ENCODE measurements at regions of chr10 and their contacts with region 1.

Region 1: GRCh38 chr10:73743905-73744663 is at the start of gene SEC24C:
- DNase-seq: peak; percentile 97
- ATAC-seq: peak; percentile 93 to 98 (median 97)
- H3K4me3 ChIP-seq: peak within 1 kb of the TSS; percentile 69 to 94 (median 83)
- H3K27ac ChIP-seq: peak within 1 kb of the TSS; percentile 83 to 99 (median 92)
- H3K4me1 ChIP-seq: peaks cover 15 to 53% (median 43%) of the 10 kb centered on the region in 9 donors
- H3K27me3 ChIP-seq: no peaks in the 10 kb centered on the region
- CTCF ChIP-seq: peak in 2 of 9 donors; percentile 2 to 12
- total RNA-seq, gene SEC24C: 44.5 to 59.7 (median 51.5) TPM

Region 2: DNA sequence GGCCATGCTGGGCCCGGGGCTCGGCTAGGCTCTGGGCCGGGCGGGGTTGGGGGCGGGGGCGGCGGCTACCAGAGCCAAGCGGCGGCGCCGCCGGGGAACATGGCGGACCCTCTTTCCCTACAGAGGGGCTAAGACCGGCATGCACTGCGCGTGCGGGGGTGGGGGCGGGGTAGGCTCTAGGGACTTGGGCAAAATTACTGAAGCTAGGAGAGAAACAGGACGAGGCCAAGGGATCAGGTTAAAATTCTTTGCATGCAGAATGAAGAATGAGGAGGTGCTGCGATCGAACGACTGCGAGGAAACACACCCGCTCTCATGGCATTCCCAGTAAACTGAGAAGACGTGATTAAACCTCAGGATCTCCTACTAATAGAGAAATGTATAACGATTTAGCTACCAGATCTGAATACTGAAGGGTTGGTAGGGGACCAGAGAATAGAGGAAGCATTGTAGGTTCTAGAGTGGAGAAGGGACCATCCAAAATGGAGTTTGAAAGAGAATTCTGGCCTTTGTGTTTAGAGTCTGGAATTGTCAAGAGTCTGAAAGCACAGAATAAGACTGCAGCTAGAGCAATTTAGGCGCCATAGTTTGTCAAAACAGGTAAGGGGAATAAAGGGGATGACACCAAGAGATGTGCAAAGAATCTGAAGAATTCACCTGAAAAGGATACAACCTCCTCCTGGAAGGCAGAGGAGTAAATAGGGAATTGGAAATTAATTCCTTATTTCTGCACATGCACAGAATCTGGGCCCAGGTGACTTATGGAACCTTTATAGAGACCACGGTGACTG is 248.0 kb before region 1 on chr10 and contains the start of gene PPP3CB:
- intact Hi-C with region 1: no loop called
- DNase-seq: peak; percentile 91 to 95
- ATAC-seq: peak; percentile 88 to 96 (median 92)
- H3K4me3 ChIP-seq: peak within 1 kb of the TSS; percentile 66 to 98 (median 83)
- H3K27ac ChIP-seq: peak within 1 kb of the TSS; percentile 90 to 99 (median 98)
- H3K4me1 ChIP-seq: peaks cover 7 to 48% (median 41%) of the 10 kb centered on the region in 9 donors
- H3K27me3 ChIP-seq: no peaks in the 10 kb centered on the region
- CTCF ChIP-seq: no peak
- total RNA-seq, gene PPP3CB: 52.5 to 78.6 (median 64.5) TPM

Region 3: DNA sequence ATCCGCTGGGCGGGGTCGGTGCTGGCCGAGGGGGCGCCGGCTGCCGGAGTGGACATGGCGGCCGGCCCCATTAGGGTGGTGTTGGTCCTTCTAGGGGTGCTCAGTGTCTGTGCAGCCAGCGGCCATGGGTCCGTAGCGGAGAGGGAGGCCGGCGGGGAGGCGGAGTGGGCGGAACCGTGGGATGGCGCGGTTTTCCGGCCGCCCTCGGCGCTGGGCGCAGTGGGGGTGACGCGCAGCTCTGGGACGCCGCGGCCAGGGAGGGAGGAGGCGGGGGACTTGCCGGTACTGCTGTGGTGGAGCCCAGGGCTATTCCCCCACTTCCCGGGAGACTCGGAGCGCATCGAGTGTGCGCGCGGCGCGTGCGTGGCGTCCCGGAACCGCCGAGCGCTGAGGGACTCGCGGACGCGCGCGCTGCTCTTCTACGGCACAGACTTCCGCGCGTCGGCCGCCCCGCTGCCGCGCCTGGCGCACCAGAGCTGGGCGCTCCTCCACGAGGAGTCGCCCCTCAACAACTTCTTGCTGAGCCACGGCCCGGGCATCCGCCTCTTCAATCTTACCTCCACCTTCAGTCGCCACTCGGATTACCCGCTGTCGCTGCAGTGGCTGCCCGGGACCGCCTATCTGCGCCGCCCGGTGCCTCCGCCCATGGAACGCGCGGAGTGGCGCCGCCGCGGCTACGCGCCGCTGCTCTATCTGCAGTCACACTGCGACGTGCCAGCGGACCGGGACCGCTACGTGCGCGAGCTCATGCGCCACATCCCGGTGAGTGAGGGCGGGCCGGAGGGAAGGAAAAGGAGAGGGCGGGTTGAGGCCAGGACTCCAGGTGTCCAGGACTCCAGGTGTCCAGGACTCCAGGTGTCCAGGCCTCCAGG is 28.4 kb after region 1 on chr10:
- intact Hi-C with region 1: loop called in 1 of 10 experiments (anchors 1 kb)
- DNase-seq: peak; percentile 76 to 83
- ATAC-seq: peak; percentile 84 to 94 (median 90)
- H3K4me3 ChIP-seq: peak overlapping the region; percentile 71 to 99 (median 83)
- H3K27ac ChIP-seq: peak overlapping the region; percentile 86 to 100 (median 98)
- H3K4me1 ChIP-seq: peaks cover 24 to 47% (median 42%) of the 10 kb centered on the region in 9 donors
- H3K27me3 ChIP-seq: no peaks in the 10 kb centered on the region
- CTCF ChIP-seq: peak in 5 of 9 donors; percentile 20 to 43 (median 39)

Region 4: DNA sequence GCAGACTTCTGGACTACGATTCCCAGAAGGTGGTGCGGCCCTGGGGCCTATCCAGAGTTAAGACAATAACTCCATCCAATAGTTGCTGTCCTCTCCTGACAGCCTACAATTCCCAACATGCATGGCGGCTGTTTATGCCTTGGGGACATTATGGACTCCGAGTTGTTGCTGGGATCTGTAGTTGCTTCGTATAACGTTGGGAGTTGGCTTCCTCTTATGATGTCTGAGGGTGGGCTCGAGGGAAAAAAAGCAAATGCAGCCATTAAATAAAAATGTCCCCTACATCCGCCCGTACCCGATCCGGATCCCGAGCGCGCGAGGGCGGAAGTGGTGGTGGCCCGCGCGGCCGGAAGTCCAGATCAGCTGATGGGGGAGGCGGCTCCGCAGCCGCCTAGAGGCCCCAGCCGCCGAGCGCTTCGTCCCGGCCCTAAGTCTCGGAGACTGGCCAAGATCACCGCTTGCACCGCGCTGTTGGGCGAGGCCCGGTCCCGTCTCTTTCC is 41.2 kb after region 1 on chr10 and contains the start of gene ZSWIM8:
- intact Hi-C with region 1: loop called in 1 of 10 experiments (anchors 5 kb)
- DNase-seq: peak; percentile 86 to 92
- ATAC-seq: peak; percentile 87 to 95 (median 92)
- H3K4me3 ChIP-seq: peak within 1 kb of the TSS; percentile 68 to 97 (median 92)
- H3K27ac ChIP-seq: peak within 1 kb of the TSS; percentile 74 to 97 (median 90)
- H3K4me1 ChIP-seq: peaks cover 15 to 67% (median 59%) of the 10 kb centered on the region in 9 donors
- H3K27me3 ChIP-seq: no peaks in the 10 kb centered on the region
- CTCF ChIP-seq: peak in 3 of 9 donors; percentile 10 to 20 (median 14)
- total RNA-seq, gene ZSWIM8: 35.2 to 72.5 (median 43.5) TPM

Region 5: DNA sequence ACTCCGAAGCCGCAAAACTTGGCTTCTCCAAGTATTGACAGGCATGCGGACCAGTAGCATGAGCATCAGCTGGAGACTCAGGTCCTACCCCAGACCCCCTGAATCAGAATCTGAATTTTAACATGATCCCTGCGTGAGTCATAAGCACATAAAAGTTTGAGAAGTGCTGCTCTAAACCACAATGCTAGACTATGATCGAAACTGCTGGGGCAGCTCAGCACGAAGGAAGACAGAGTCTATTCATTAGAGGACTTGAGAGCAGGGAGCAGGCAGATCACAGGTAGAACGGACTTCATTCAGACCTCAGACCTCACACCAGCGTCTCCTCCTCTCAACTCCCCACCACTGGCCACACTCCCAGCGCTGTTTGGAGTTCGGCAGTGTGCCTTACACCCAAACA is 113.4 kb after region 1 on chr10:
- intact Hi-C with region 1: no loop called
- DNase-seq: no peak
- ATAC-seq: no peak
- H3K4me3 ChIP-seq: no peak overlapping the region
- H3K27ac ChIP-seq: no peak overlapping the region
- H3K4me1 ChIP-seq: peaks cover 0 to 30% (median 0%) of the 10 kb centered on the region in 9 donors
- H3K27me3 ChIP-seq: no peaks in the 10 kb centered on the region
- CTCF ChIP-seq: no peak